GM23248 (cell line): ENCODE measurements at regions of chr6 and their contacts with region 1.

Region 1: GRCh38 chr6:37169496-37170272 is at the start of gene PIM1:
- DNase-seq: peak; percentile 99
- H3K4me3 ChIP-seq: peak within 1 kb of the TSS; percentile 86
- H3K27ac ChIP-seq: peak within 1 kb of the TSS; percentile 93
- H3K4me1 ChIP-seq: peaks cover 15% of the 10 kb centered on the region
- H3K27me3 ChIP-seq: no peaks in the 10 kb centered on the region
- total RNA-seq, gene PIM1: 12.6 and 15.5 TPM in 2 replicates

Region 2: DNA sequence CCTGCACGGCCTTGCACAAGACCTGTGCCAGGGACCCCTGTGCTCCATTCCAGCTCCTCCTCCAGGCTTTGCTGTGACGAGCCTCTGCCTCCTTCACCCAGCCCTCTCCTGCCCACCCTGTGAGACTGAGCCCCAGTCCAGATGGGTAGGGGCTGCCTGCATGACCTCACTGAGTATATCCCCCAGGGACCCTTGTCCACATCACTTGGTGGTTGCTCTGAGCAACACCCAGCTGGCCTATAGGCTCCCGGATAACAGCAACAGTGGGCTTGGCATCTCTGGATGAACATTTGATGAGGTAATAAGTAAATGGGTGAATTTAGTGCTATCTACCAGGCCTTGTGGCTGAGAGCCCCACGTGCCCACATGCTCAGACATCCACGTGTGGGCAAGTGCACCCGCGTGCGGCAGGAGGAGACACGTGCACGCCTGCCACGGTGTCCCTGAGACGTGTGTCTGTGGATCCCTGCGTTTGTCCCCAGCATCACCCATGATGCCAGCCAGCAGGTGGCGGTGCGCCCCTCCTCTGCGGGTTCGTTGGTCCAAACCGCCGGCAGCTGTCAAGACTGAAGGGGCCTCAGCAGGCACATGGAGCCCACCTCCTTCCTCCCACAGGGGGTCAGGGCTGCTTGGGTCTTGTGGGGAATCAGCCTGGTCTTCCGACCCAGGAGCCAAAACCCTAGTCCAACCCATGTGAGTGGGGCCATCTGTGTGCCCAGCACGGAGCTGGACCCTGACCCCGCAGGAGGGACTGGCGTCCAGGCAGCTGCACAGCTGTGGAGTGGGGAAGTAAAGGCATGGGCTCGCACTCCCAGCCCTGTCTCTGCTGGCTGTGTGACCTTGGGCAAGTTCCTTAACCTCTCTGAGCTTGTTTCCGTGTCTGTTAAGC is 118.3 kb before region 1 on chr6:
- in situ Hi-C with region 1: loop called (anchors 10 kb)
- DNase-seq: peak; percentile 87
- H3K4me3 ChIP-seq: no peak overlapping the region
- H3K27ac ChIP-seq: no peak overlapping the region
- H3K4me1 ChIP-seq: peaks cover 5% of the 10 kb centered on the region; the same call in 1 of the 2 replicates
- H3K27me3 ChIP-seq: no peaks in the 10 kb centered on the region

Region 3: DNA sequence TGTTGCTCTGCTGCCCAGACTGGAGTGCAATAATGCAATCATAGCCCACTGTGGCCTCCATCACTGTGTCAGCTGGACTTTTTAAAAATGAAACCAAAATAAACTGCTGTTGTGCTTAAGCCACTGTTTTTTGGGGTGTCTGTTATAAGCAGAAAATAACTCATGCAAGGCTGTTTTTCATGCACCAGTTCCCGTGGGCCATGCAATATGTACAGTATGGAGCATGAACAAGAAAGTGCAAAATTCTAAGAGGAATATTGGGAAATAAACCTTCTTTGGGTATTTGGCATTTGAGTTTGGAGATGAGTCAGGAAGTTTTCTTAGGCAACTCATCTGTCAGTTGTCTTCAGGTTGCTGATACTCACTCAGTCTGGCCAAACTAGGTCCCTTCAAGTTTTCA is 634.9 kb after region 1 on chr6:
- in situ Hi-C with region 1: no loop called
- DNase-seq: peak; percentile 66
- H3K4me3 ChIP-seq: no peak overlapping the region
- H3K27ac ChIP-seq: no peak overlapping the region
- H3K4me1 ChIP-seq: no peaks in the 10 kb centered on the region
- H3K27me3 ChIP-seq: no peaks in the 10 kb centered on the region